Mucosa of descending colon (tissue), 3 donors: ENCODE measurements at regions of chr5 and their contacts with region 1.

Region 1: GRCh38 chr5:43729846-43730478 is 127.0 kb downstream of the NNT start:
- DNase-seq: no peak
- ATAC-seq: no peak
- H3K4me3 ChIP-seq: no peak overlapping the region
- H3K4me1 ChIP-seq: no peaks in the 10 kb centered on the region
- CTCF ChIP-seq: no peak

Region 2: DNA sequence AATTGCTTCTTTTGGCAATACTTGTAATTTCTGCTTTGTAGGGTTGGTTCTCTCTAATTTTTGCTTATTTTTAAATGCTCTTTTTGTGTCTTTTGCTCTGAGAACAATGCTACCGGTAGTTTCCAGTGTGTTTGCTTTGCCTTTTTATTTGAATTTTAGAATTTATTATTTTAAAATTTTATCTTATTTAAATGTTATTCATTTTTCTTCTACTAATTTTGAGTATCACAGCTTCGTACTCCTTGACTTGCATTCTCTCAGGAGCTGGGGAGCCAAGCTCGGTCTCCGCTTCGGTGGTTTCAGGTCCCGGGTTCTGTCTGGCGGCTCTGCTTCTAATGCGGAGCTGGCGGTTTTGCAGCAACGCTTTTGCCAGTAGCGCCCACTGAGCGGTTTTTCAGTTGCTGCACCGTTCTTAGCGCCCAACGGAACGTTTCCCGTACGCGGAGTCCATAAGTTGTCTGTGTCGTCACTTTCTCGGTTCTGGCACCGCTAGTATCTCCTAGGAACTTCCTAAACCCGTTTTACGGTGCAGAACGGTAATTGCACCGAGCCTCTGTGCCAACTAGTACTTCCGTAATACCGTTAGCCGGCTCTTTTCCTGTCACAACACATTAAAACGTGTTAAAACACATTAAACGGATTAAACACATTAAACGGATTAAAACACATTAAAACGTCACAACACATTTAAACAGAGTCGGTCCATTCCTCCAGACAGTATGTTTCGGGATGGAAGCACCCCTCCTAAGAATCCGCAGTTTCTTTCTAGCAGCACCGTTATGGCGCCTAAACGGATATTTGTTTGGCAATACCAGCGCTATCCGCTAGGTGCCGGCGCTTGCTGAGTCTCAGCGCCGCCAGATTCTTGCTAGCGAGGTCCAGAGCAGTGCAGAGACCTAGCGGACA is 735.5 kb before region 1 on chr5:
- intact Hi-C with region 1: no loop called
- DNase-seq: peak; percentile 88 to 94 (median 89)
- ATAC-seq: peak; percentile 81
- H3K4me3 ChIP-seq: no peak overlapping the region
- H3K4me1 ChIP-seq: peaks cover 3% of the 10 kb centered on the region
- CTCF ChIP-seq: peak; percentile 90

Region 3: DNA sequence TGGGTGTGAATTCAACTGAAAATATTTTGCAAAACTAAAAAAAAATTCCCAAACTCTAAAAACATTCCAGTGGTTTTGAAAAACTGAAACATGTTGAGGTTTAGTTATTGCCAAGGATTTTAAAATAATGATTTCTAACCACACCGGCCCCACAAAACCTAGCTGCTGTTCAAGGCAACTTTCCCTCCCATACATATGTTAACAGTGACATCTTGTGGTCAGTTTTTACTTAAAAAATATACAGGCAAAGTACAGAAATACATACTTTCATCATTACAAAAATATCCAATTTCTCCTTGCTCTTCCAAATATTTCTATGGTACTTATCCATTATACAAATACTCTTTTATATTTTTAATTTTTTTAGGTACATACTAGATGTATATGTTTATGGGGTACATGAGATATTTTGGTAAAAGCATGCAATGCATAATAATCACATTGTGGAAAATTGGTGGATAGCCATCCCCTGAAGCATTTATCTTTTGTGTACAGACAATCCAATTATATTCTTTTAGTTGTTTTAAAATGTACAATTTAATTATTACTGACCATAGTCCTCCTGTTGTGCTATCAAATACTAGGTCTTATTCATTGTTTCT is 1044.4 kb after region 1 on chr5:
- intact Hi-C with region 1: loop called in 1 of 2 experiments (anchors 10 kb)
- DNase-seq: peak in 1 of 3 donors; percentile 4
- ATAC-seq: no peak
- H3K4me3 ChIP-seq: no peak overlapping the region
- H3K4me1 ChIP-seq: no peaks in the 10 kb centered on the region
- CTCF ChIP-seq: no peak